ENCODE measurements at regions of chr10 and their contacts with region 1.

Region 1: DNA sequence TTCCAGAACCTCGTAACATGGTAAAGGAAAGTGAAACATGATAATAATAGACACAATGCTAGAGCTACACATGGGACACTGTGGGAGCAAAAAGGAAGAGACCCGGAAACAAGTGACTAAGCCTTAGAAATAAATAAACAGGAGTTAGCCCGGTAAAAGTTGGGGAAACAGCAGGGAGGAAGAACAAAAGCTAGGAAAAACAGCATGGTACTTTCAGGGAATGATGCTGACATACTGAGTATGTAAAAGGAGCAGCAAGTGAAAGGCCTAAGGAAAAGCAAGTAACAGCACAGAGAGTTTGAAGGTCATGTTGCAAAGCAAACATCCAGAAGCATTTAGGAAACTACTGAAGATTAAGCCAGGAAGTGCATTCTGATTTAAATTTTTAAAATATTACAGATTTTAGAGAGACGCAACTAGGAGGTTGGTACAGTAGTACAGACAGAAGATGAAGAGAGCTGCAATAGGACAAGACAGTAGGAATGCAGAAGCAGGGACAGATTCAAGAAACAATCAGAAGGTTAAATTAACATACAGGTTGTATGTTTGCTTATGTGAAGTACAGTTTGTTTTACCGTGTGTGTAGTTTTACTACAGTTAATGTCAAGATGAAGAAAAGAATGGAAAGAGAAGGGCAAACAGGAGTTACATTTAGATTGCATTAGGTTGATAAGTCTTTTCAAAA is 63.7 kb downstream of the ARHGAP12 start:
- DNase-seq: peak; percentile 42
- H3K4me3 Mint-ChIP-seq: peak overlapping the region; percentile 40
- H3K27ac Mint-ChIP-seq: peak overlapping the region; percentile 77
- H3K4me1 Mint-ChIP-seq: peaks cover 38% of the 10 kb centered on the region
- H3K27me3 Mint-ChIP-seq: no peaks in the 10 kb centered on the region
- CTCF ChIP-seq: no peak

Region 2: GRCh38 chr10:31536302-31536701 is 328.7 kb before region 1 on chr10:
- CTCF ChIA-PET with region 1: no interaction called
- POLR2A ChIA-PET with region 1: no interaction called
- intact Hi-C with region 1: no loop called
- DNase-seq: no peak
- H3K4me3 Mint-ChIP-seq: no peak overlapping the region
- H3K27ac Mint-ChIP-seq: no peak overlapping the region
- H3K4me1 Mint-ChIP-seq: no peaks in the 10 kb centered on the region
- H3K27me3 Mint-ChIP-seq: no peaks in the 10 kb centered on the region
- CTCF ChIP-seq: no peak

Region 3: GRCh38 chr10:31782701-31783100 is 82.3 kb before region 1 on chr10:
- CTCF ChIA-PET with region 1: no interaction called
- POLR2A ChIA-PET with region 1: no interaction called
- intact Hi-C with region 1: no loop called
- DNase-seq: no peak
- H3K4me3 Mint-ChIP-seq: no peak overlapping the region
- H3K27ac Mint-ChIP-seq: no peak overlapping the region
- H3K4me1 Mint-ChIP-seq: no peaks in the 10 kb centered on the region
- H3K27me3 Mint-ChIP-seq: no peaks in the 10 kb centered on the region
- CTCF ChIP-seq: no peak

Region 4: DNA sequence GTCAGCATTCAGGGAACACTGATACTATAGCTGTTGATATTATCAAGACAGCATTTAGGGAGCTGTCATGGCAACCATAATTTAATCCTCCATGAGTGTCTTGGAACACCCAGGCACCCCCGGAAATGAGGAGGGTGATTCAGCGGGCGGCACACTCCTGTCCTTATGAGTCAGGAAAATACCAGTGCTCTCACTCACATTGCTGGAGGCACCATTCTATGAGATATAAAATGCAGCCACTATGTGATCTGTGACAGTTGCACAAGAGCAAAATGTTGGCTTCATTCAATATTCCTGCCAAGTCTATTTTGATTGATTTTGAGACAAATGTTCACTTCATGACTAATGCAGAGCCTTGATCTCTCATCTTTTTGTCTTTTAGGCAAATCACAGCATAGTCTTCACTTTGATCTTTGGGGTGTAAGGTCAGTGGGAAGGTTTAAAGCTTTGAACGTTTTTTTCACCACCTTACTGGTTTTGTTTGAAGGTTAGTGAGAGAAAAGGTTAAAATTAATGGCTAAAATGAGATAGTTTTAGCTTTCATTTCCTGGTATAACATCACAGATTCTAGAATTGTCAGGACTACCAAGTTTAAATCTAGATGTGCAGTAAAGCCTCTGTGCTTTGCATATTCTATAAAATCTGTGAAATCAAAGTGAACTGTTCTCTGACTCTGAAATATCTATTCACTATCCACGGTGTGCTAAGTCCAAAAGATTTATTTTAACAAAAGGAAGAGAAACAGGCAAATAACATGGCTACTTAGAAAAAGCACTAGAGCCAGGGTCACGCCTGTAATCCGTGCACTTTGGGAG is 76.1 kb after region 1 on chr10:
- CTCF ChIA-PET with region 1: interaction called, 77 read pairs
- POLR2A ChIA-PET with region 1: interaction called, 12 read pairs
- intact Hi-C with region 1: no loop called
- DNase-seq: peak; percentile 98
- H3K4me3 Mint-ChIP-seq: peak overlapping the region; percentile 36
- H3K27ac Mint-ChIP-seq: peak overlapping the region; percentile 87
- H3K4me1 Mint-ChIP-seq: peaks cover 28% of the 10 kb centered on the region
- H3K27me3 Mint-ChIP-seq: no peaks in the 10 kb centered on the region
- CTCF ChIP-seq: no peak

Region 5: DNA sequence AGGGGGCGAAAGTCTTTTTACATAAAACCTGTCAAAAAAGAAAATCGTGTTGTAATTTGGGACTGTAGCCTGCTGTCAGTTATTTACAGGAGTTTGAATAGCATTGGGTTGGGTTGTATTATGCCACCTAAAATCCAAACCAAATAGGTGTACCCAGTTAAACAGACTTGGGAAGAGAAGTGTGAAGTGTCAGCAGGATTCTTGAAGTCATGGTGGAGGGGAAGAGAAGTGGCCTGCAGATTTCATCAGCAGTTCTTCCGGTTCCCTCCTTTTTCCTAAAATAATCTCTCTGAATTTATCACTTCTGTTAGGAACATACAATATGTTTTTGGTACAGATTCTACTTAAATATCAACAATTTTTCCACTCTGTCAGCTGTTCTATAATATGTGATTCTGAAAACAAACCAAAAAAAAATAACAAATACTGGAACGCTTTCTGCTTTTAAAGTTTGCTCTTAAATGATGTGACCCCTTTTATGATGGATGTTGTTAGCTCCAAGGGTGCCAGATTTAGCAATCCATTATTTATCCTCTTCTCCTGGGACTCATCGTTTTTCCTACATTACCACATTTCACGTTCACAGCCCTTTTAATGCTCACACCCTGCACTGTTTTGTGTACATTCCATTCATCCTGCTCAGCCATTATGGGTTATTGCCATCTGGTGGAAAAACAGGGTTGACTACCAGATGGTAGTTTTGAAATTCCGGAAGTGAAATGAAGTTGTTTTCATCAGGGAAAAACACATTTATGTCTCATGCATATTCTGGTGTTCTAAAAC is 82.4 kb after region 1 on chr10:
- CTCF ChIA-PET with region 1: interaction called, 77 read pairs
- POLR2A ChIA-PET with region 1: interaction called, 17 read pairs
- intact Hi-C with region 1: loop called (anchors 1 kb)
- DNase-seq: peak; percentile 91
- H3K4me3 Mint-ChIP-seq: peak overlapping the region; percentile 15
- H3K27ac Mint-ChIP-seq: peak overlapping the region; percentile 81
- H3K4me1 Mint-ChIP-seq: peaks cover 19% of the 10 kb centered on the region
- H3K27me3 Mint-ChIP-seq: no peaks in the 10 kb centered on the region
- CTCF ChIP-seq: peak; percentile 59

Region 6: DNA sequence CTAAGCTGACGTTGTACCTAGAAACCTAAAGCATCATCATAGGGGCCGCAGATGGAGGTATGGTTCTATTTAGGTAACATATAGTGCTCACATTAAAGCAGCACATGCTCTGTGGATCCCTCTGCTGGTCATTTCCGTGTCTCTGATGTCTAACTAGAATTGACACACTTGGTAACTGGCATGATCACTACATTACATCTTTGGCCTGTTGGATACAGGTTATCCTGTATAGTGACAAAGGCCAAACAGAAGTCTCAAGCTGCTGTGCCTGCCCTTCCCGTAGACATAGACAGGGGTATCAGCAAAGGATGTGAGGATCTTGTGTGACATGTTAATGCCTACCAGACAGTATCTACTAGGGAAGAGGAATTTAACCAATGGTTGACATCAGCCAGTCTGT is 140.1 kb after region 1 on chr10:
- CTCF ChIA-PET with region 1: interaction called, 5 read pairs
- POLR2A ChIA-PET with region 1: interaction called, 11 read pairs
- intact Hi-C with region 1: loop called (anchors 5 kb)
- DNase-seq: peak; percentile 62
- H3K4me3 Mint-ChIP-seq: no peak overlapping the region
- H3K27ac Mint-ChIP-seq: no peak overlapping the region
- H3K4me1 Mint-ChIP-seq: no peaks in the 10 kb centered on the region
- H3K27me3 Mint-ChIP-seq: no peaks in the 10 kb centered on the region
- CTCF ChIP-seq: peak; percentile 24

Measured in MCF 10A (cell line).